ENCODE measurements at regions of chr10 and their contacts with region 1.

Region 1: GRCh38 chr10:60032723-60033122 is 126.4 kb upstream of the CCDC6 start:
- DNase-seq: peak in 3 of 5 donors; percentile 19 to 32 (median 23)
- ATAC-seq: peak; percentile 65 to 93 (median 86)
- H3K4me3 ChIP-seq: no peak overlapping the region
- H3K27ac ChIP-seq: peak overlapping the region in 2 of 12 donors; percentile 12 to 24
- H3K4me1 ChIP-seq: peaks cover 0 to 18% (median 1%) of the 10 kb centered on the region in 12 donors
- H3K27me3 ChIP-seq: no peaks in the 10 kb centered on the region
- CTCF ChIP-seq: peak in 11 of 12 donors; percentile 8 to 67 (median 42)
- POLR2A ChIP-seq: no peak

Region 2: DNA sequence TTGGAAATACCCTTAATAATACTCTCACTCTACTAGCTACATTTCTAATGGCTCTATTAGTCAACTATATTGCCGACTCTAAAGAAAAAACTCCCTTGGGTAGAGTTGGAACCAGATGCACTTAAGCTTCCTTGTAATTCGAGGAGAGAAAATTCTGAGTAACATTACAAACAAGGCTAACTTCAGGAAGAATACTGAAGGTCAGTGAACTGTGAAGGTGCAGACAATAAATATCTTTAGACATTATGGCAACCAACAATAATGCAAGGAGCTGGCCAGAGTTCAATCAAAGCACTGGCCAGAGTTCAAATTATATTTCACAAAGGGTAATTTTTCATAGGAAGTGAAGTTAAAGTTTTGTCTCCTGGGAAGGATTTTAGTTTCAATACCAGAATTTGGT is 238.8 kb before region 1 on chr10:
- intact Hi-C with region 1: no loop called
- DNase-seq: no peak
- ATAC-seq: no peak
- H3K4me3 ChIP-seq: no peak overlapping the region
- H3K27ac ChIP-seq: no peak overlapping the region
- H3K4me1 ChIP-seq: peaks cover 0 to 18% (median 0%) of the 10 kb centered on the region in 12 donors
- H3K27me3 ChIP-seq: no peaks in the 10 kb centered on the region
- CTCF ChIP-seq: no peak
- POLR2A ChIP-seq: no peak

Region 3: DNA sequence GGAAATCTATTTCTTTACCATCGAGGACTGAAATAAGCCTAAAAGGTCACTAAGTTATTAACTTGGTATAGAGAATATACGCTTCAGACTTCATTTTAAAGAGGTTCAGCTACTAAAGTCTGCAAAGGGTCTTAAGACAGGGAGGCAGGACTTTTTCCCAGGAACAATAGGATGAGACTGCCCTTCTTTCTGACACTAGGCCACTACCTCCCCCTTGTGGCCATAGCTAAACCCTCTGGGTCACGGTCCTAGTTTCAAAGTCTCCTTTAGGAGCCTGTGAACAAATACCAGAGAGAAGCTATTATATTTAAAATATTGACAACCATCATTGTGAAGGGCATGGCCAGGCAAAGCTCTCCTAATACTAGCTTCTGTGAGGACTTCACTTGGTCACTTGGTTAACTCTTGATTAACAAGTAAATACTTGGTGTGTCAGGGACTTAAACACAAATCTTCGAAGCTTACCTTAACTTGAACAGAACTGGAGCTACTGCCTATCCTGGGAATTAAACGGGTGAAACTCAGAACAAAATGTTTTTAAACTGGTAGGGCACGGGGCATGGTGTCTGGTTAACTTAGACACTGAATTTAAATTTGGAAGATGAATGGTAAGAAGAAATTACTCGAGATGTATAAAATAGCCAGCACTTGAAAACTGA is 202.0 kb before region 1 on chr10:
- intact Hi-C with region 1: loop called in 2 of 10 experiments (anchors 10 kb)
- DNase-seq: peak in 4 of 5 donors; percentile 26 to 40 (median 34)
- ATAC-seq: peak in 3 of 4 donors; percentile 56 to 73 (median 57)
- H3K4me3 ChIP-seq: no peak overlapping the region
- H3K27ac ChIP-seq: no peak overlapping the region
- H3K4me1 ChIP-seq: peaks cover 0 to 41% (median 9%) of the 10 kb centered on the region in 12 donors
- H3K27me3 ChIP-seq: no peaks in the 10 kb centered on the region
- CTCF ChIP-seq: peak; percentile 64 to 87 (median 78)
- POLR2A ChIP-seq: no peak

Region 4: DNA sequence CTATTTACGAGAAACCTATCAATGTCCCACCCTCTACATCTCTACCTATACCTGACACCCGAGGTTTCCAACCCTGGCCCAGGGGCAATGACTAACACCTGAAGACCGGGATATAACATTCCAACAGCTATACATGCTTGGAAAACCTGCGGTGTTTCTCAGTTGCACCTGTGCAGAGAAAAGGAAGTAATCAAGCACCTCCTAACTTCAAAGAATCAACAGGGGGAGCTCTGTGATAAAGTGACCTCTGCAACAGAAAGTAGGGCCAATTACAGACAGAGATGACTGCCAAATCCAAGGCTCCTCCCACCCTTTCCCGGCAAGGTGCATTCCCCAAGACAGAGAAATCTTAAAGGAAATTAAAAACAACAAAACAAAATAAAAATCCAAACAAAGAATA is 167.6 kb before region 1 on chr10:
- intact Hi-C with region 1: loop called in 6 of 10 experiments (anchors 5 to 10 kb)
- DNase-seq: peak in 1 of 5 donors; percentile 42
- ATAC-seq: peak; percentile 65 to 86 (median 72)
- H3K4me3 ChIP-seq: no peak overlapping the region
- H3K27ac ChIP-seq: peak overlapping the region in 3 of 12 donors; percentile 12 to 57 (median 16)
- H3K4me1 ChIP-seq: peaks cover 0 to 39% (median 19%) of the 10 kb centered on the region in 12 donors
- H3K27me3 ChIP-seq: no peaks in the 10 kb centered on the region
- CTCF ChIP-seq: peak in 11 of 12 donors; percentile 17 to 60 (median 44)
- POLR2A ChIP-seq: no peak

Region 5: GRCh38 chr10:59906417-59907202 is 126.1 kb before region 1 on chr10 and contains the start of gene CCDC6:
- intact Hi-C with region 1: loop called in 1 of 10 experiments (anchors 10 kb)
- DNase-seq: peak; percentile 93 to 96 (median 96)
- ATAC-seq: peak; percentile 90 to 96 (median 96)
- H3K4me3 ChIP-seq: peak within 1 kb of the TSS; percentile 76 to 98 (median 92)
- H3K27ac ChIP-seq: peak within 1 kb of the TSS; percentile 83 to 96 (median 91)
- H3K4me1 ChIP-seq: peaks cover 0 to 52% (median 29%) of the 10 kb centered on the region in 12 donors
- H3K27me3 ChIP-seq: no peaks in the 10 kb centered on the region
- CTCF ChIP-seq: peak; percentile 68 to 87 (median 80)
- POLR2A ChIP-seq: peak in 1 of 2 donors; percentile 88
- total RNA-seq, gene CCDC6: 13.8 to 47.1 (median 20.2) TPM

Region 6: GRCh38 chr10:59967069-59967468 is 65.7 kb before region 1 on chr10:
- intact Hi-C with region 1: loop called in 1 of 10 experiments (anchors 10 kb)
- DNase-seq: no peak
- ATAC-seq: no peak
- H3K4me3 ChIP-seq: no peak overlapping the region
- H3K27ac ChIP-seq: no peak overlapping the region
- H3K4me1 ChIP-seq: peaks cover 0 to 13% (median 0%) of the 10 kb centered on the region in 12 donors
- H3K27me3 ChIP-seq: no peaks in the 10 kb centered on the region
- CTCF ChIP-seq: no peak
- POLR2A ChIP-seq: no peak